Vagina (tissue), 2 donors: ENCODE measurements at regions of chr13 and their contacts with region 1.

Region 1: DNA sequence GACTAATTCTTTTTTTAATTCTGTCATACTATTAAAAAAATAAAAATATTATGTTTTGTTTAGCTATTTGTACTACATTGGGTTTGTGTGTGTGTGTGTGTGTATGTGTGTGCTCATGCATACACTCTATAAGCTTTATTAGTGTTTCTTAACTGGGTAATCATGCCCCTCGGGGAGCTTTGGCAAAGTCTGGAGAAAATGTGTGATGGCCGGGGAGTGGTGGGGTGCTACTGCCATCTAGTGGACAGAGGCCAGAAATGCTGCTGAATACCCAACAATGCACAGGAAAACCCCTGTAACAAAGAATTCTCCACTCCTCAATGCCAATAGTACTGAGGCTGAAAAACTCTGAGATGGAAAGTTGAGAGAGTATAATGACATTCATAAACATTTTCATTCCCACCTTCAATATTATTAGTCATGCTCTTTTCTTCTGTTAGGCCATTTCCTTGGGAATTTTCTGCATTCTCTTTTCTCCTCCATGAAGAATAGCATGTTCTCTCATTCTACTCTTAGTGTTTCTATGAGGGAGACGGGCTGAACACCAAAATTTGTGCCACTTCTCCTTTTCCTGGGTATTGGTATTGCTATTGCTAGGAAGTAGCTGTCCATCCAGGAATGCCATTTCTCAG is 157.3 kb downstream of the DNAJC3 start:
- DNase-seq: no peak
- H3K4me3 ChIP-seq: no peak overlapping the region
- H3K27ac ChIP-seq: no peak overlapping the region
- H3K4me1 ChIP-seq: no peaks in the 10 kb centered on the region
- H3K27me3 ChIP-seq: no peaks in the 10 kb centered on the region
- CTCF ChIP-seq: peak; percentile 85 to 96 (median 88)
- POLR2A ChIP-seq: no peak

Region 2: GRCh38 chr13:95624020-95624419 is 210.2 kb before region 1 on chr13:
- intact Hi-C with region 1: loop called (anchors 5 kb)
- DNase-seq: no peak
- H3K4me3 ChIP-seq: no peak overlapping the region
- H3K27ac ChIP-seq: no peak overlapping the region
- H3K4me1 ChIP-seq: no peaks in the 10 kb centered on the region
- H3K27me3 ChIP-seq: no peaks in the 10 kb centered on the region
- CTCF ChIP-seq: peak in 2 of 3 experiments; percentile 38 to 47
- POLR2A ChIP-seq: no peak

Region 3: DNA sequence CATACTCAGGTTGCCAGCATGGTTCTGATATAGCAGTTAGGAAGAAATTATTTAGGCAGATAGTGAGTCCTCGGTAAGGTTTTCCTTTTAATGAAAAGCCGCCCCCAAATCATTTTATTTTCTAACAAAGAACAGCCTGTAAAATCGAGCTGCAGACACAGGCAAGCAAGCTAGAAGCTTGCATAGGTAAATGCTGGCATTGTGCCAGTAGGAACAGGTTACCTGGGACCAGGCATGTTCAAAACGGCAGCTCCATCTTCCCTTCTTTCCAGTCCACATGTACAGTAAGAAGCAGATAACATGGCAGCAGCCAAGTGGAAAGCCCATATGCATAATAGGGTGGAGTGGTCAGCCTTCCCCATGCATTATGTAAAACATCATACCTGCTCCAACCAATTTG is 147.9 kb after region 1 on chr13:
- intact Hi-C with region 1: no loop called
- DNase-seq: no peak
- H3K4me3 ChIP-seq: no peak overlapping the region
- H3K27ac ChIP-seq: no peak overlapping the region
- H3K4me1 ChIP-seq: no peaks in the 10 kb centered on the region
- H3K27me3 ChIP-seq: no peaks in the 10 kb centered on the region
- CTCF ChIP-seq: no peak
- POLR2A ChIP-seq: no peak